Astrocyte of the cerebellum (primary cell): ENCODE measurements at regions of chr1 and their contacts with region 1.

Region 1: GRCh38 chr1:223298701-223299100 is 65.3 kb downstream of the SUSD4 start:
- DNase-seq: no peak
- H3K4me3 ChIP-seq: no peak overlapping the region
- CTCF ChIP-seq: no peak

Region 2: GRCh38 chr1:223338811-223339746 is 40.4 kb after region 1 on chr1:
- in situ Hi-C with region 1: loop called (anchors 5 kb)
- DNase-seq: peak; percentile 39
- H3K4me3 ChIP-seq: no peak overlapping the region
- CTCF ChIP-seq: no peak